GM12878 (cell line): ENCODE measurements at regions of chr10 and their contacts with region 1.

Region 1: DNA sequence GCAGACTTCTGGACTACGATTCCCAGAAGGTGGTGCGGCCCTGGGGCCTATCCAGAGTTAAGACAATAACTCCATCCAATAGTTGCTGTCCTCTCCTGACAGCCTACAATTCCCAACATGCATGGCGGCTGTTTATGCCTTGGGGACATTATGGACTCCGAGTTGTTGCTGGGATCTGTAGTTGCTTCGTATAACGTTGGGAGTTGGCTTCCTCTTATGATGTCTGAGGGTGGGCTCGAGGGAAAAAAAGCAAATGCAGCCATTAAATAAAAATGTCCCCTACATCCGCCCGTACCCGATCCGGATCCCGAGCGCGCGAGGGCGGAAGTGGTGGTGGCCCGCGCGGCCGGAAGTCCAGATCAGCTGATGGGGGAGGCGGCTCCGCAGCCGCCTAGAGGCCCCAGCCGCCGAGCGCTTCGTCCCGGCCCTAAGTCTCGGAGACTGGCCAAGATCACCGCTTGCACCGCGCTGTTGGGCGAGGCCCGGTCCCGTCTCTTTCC is at the start of gene ZSWIM8:
- DNase-seq: peak; percentile 84
- ATAC-seq: peak; percentile 89
- H3K4me3 ChIP-seq: peak within 1 kb of the TSS; percentile 91
- H3K27ac ChIP-seq: peak within 1 kb of the TSS; percentile 85
- H3K4me1 ChIP-seq: peaks cover 10% of the 10 kb centered on the region
- H3K27me3 ChIP-seq: no peaks in the 10 kb centered on the region
- CTCF ChIP-seq: no peak
- EP300 ChIP-seq: no peak
- POLR2A ChIP-seq: peak; percentile 86
- RAD21 ChIP-seq: no peak
- polyA plus RNA-seq, gene ZSWIM8: 7.8 to 8.5 TPM

Region 2: DNA sequence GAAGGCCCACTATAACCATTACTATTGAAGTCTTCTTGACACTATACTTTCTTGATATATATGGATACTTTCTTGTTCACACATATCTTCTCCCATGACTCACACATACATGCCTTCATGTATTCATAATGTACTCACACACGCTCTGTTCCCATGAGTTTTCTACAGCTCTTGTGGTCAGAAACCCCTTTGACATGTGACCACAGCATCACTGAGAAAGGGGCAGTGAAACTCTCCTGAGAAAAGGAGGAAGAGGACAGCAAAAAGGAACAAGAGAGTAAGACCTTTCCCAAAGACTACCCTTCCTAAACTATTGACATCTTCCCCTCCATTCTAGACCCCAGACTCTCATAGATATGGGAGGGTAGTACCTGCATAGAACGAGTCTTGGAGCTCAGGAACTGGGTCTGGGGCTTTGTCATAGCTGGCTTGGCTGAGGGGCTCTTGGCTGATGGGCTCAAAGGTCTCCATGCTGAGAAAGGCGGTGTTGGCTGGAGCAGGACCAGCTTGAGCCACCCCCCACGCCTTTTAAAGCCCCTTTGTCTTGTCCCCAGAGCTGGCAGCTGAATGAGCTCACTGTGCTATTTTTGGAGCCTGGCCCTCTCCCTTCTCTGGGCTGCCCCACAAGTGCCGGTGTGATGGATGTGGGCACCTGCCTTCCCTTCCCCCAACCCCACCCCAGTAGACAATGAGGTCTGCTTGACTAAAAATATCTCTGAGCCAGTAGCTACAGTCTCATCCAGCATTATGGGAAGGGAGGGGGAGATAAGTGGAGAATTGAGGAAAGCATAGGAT is 134.5 kb before region 1 on chr10:
- CTCF ChIA-PET with region 1: interaction called, 6 read pairs
- POLR2A ChIA-PET with region 1: interaction called, 4 read pairs
- RAD21 ChIA-PET with region 1: interaction called, 3 read pairs
- SMC1A ChIA-PET with region 1: interaction called, 8 read pairs
- in situ Hi-C with region 1: no loop called
- intact Hi-C with region 1: loop called (anchors 10 kb)
- DNase-seq: peak; percentile 65
- ATAC-seq: peak; percentile 70
- H3K4me3 ChIP-seq: no peak overlapping the region
- H3K27ac ChIP-seq: peak overlapping the region; percentile 77
- H3K4me1 ChIP-seq: peaks cover 25% of the 10 kb centered on the region
- H3K27me3 ChIP-seq: no peaks in the 10 kb centered on the region
- CTCF ChIP-seq: no peak
- EP300 ChIP-seq: peak; percentile 26 to 45; a peak in 1 of 4 replicates
- POLR2A ChIP-seq: no peak
- RAD21 ChIP-seq: no peak

Region 3: DNA sequence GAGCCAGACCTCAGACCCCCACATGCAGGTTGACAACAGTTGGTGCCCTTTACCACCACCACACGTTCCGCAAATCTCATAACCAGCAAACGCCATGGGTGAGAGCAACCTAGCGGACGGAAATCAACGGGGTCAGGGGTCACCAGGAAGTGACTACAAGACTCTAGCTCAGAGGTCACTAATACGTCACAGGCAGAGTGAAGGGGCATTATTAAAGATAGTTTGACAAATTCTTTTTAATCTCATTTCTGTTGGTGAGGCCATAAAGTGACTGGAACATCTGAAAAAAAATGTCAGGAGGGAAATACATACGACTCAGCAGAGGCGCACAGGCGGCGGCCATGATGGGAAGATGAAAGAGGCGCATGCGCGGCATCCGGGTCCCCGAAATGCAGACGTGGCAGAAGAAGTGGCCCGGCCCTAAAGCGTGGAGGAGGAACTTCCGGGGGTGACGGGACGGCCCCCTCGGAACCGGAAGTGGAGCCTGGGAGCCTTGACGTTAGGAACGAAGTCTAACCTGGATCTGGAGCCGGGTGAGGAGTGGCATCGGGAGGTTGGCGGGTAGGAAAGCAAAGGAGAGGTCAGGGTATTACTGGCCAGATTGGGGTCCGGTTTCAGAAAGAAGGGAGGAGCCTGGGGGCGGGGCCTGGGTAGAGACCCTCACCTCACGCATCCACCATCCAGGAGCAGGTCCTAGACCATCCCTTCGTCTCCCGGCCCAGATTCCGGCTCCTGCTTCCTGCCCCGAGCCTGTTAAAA is 41.2 kb before region 1 on chr10 and contains the start of gene SEC24C:
- CTCF ChIA-PET with region 1: no interaction called
- POLR2A ChIA-PET with region 1: interaction called, 14 read pairs
- RAD21 ChIA-PET with region 1: interaction called, 11 read pairs
- SMC1A ChIA-PET with region 1: interaction called, 12 read pairs
- in situ Hi-C with region 1: no loop called
- intact Hi-C with region 1: loop called (anchors 1 kb)
- DNase-seq: peak; percentile 88
- ATAC-seq: peak; percentile 92
- H3K4me3 ChIP-seq: peak within 1 kb of the TSS; percentile 95
- H3K27ac ChIP-seq: peak within 1 kb of the TSS; percentile 97
- H3K4me1 ChIP-seq: peaks cover 11% of the 10 kb centered on the region
- H3K27me3 ChIP-seq: no peaks in the 10 kb centered on the region
- CTCF ChIP-seq: no peak
- EP300 ChIP-seq: no peak
- POLR2A ChIP-seq: peak; percentile 92
- RAD21 ChIP-seq: no peak
- polyA plus RNA-seq, gene SEC24C: 12.7 to 18.8 TPM

Region 4: GRCh38 chr10:73772280-73773151 is 12.8 kb before region 1 on chr10:
- CTCF ChIA-PET with region 1: interaction called, 40 read pairs
- POLR2A ChIA-PET with region 1: interaction called, 40 read pairs
- RAD21 ChIA-PET with region 1: interaction called, 18 read pairs
- SMC1A ChIA-PET with region 1: interaction called, 28 read pairs
- in situ Hi-C with region 1: no loop called
- intact Hi-C with region 1: no loop called
- DNase-seq: peak; percentile 48
- ATAC-seq: peak; percentile 83
- H3K4me3 ChIP-seq: peak overlapping the region; percentile 94
- H3K27ac ChIP-seq: peak overlapping the region; percentile 83
- H3K4me1 ChIP-seq: peaks cover 5% of the 10 kb centered on the region
- H3K27me3 ChIP-seq: no peaks in the 10 kb centered on the region
- CTCF ChIP-seq: peak in 1 of 3 experiments; percentile 13; a peak in 2 of 6 replicates
- EP300 ChIP-seq: 0 out of 4 replicates have a peak, but pooled peaks of 1 of the 2 experiments have one; percentile 10
- POLR2A ChIP-seq: peak; percentile 79
- RAD21 ChIP-seq: no peak

Region 5: GRCh38 chr10:73810735-73811465 is 25.6 kb after region 1 on chr10:
- CTCF ChIA-PET with region 1: interaction called, 4 read pairs
- POLR2A ChIA-PET with region 1: interaction called, 25 read pairs
- RAD21 ChIA-PET with region 1: interaction called, 8 read pairs
- SMC1A ChIA-PET with region 1: interaction called, 31 read pairs
- in situ Hi-C with region 1: no loop called
- intact Hi-C with region 1: loop called (anchors 2 kb)
- DNase-seq: no peak
- ATAC-seq: peak; percentile 56
- H3K4me3 ChIP-seq: peak overlapping the region; percentile 81
- H3K27ac ChIP-seq: peak overlapping the region; percentile 80
- H3K4me1 ChIP-seq: peaks cover 6% of the 10 kb centered on the region
- H3K27me3 ChIP-seq: no peaks in the 10 kb centered on the region
- CTCF ChIP-seq: no peak
- EP300 ChIP-seq: no peak
- POLR2A ChIP-seq: no peak
- RAD21 ChIP-seq: no peak